ENCODE measurements at regions of chr2 and their contacts with region 1.

Region 1: GRCh38 chr2:119011162-119011909 is 69.3 kb downstream of the MARCO start:
- DNase-seq: peak; percentile 51
- H3K4me3 ChIP-seq: no peak overlapping the region
- H3K27ac ChIP-seq: no peak overlapping the region
- H3K4me1 ChIP-seq: peaks cover 10% of the 10 kb centered on the region
- H3K27me3 ChIP-seq: peaks cover 31% of the 10 kb centered on the region
- CTCF ChIP-seq: peak; percentile 57

Region 2: DNA sequence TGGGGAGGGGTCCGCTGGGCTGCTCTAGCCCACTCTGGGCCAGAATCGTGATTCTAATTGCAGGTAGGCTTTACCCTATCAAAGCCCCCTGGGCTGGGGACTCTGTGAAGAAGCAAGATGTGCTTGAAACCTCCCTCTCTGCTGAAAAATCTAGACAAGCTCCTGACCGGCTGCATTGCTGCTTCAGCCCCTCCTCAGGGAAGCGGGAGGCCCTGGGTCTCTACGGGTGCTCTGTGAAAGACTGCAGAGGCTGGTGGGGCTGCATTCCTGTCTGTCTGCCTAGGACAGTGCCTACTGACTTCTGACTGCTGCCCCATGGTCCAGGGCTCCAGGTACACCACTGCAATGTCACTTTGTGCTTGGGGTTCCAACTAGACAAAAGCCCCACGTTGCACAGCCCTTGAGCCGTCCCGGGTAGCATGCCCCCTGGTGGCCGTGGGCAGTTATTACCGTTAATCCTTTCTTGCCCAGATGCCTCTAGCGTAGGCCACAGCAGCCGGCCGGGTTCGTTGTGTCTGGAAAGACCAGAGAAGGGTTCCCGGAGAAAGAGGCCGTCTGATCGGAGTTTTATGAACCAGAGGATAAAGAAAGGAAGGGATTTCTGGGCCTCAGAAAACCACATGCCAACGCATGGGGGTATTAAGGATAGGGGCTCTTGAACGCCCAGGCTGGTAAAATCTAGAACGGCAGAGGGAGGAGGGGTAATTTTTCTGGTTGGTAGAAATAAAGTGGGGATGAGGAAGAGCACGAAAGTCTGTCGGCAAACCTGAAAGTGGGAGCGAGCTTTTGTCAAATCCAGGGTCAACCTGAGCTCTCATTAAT is 163.1 kb after region 1 on chr2:
- CTCF ChIA-PET with region 1: no interaction called
- POLR2A ChIA-PET with region 1: no interaction called
- intact Hi-C with region 1: loop called (anchors 5 kb)
- DNase-seq: peak; percentile 76
- H3K4me3 ChIP-seq: no peak overlapping the region
- H3K27ac ChIP-seq: no peak overlapping the region
- H3K4me1 ChIP-seq: no peaks in the 10 kb centered on the region
- H3K27me3 ChIP-seq: no peaks in the 10 kb centered on the region
- CTCF ChIP-seq: peak; percentile 93

Region 3: DNA sequence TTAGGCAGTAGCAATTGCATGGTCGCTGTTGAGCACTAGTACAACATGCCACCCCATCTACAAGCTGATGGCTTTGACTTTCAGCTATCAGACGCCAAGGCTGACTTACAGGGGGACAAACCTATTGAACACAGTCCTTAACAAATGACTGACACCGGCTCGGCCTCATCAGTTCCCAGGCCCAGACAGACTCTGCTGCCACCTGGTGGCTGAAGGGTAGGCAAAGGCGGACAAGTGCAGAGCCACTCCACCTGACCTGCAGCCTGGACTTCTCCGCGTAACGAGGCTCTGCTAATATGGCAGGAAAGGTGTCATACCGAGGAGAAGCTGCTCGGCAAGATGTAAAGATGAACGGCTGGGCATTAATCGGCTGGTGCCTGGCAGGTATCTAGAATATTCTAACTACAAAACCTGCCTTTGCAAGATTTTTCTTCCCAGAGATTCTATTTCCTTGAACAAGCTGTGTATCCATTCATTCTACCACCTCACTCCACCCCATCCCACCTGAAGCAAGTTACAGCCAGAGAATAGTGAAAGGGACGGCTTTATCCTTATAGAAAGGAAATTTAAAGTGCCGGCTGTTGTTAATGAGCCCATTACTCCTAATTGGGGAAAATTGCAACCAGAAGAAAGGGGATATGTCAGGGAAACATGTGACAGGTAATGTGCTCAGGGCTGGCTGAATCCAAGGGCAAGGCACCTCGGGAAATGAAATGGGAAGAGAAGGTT is 279.7 kb after region 1 on chr2:
- CTCF ChIA-PET with region 1: no interaction called
- POLR2A ChIA-PET with region 1: no interaction called
- intact Hi-C with region 1: loop called (anchors 5 kb)
- DNase-seq: peak; percentile 75
- H3K4me3 ChIP-seq: no peak overlapping the region
- H3K27ac ChIP-seq: no peak overlapping the region
- H3K4me1 ChIP-seq: no peaks in the 10 kb centered on the region
- H3K27me3 ChIP-seq: no peaks in the 10 kb centered on the region
- CTCF ChIP-seq: peak; percentile 79

Region 4: GRCh38 chr2:119338826-119339561 is 327.7 kb after region 1 on chr2:
- CTCF ChIA-PET with region 1: no interaction called
- POLR2A ChIA-PET with region 1: no interaction called
- intact Hi-C with region 1: no loop called
- DNase-seq: no peak
- H3K4me3 ChIP-seq: no peak overlapping the region
- H3K27ac ChIP-seq: no peak overlapping the region
- H3K4me1 ChIP-seq: no peaks in the 10 kb centered on the region
- H3K27me3 ChIP-seq: no peaks in the 10 kb centered on the region
- CTCF ChIP-seq: no peak

Measured in A673 (cell line).